Adrenal gland (tissue), 19 donors: ENCODE measurements at regions of chr15 and their contacts with region 1.

Region 1: GRCh38 chr15:33292717-33293307 is 18.0 kb upstream of the RYR3 start:
- DNase-seq: peak; percentile 48 to 78 (median 63)
- H3K4me3 ChIP-seq: no peak overlapping the region
- H3K27ac ChIP-seq: no peak overlapping the region
- H3K4me1 ChIP-seq: no peaks in the 10 kb centered on the region
- H3K27me3 ChIP-seq: no peaks in the 10 kb centered on the region
- CTCF ChIP-seq: peak; percentile 52 to 79 (median 75)
- POLR2A ChIP-seq: no peak

Region 2: GRCh38 chr15:33608714-33609113 is 315.9 kb after region 1 on chr15:
- intact Hi-C with region 1: loop called in 1 of 2 experiments (anchors 10 kb)
- DNase-seq: no peak
- H3K4me3 ChIP-seq: no peak overlapping the region
- H3K27ac ChIP-seq: no peak overlapping the region
- H3K4me1 ChIP-seq: no peaks in the 10 kb centered on the region
- H3K27me3 ChIP-seq: peaks cover 6% of the 10 kb centered on the region
- CTCF ChIP-seq: peak; percentile 24 to 55 (median 50)
- POLR2A ChIP-seq: no peak